Left ventricle myocardium superior (tissue), 1 donor: ENCODE measurements at regions of chr11 and their contacts with region 1.

Region 1: DNA sequence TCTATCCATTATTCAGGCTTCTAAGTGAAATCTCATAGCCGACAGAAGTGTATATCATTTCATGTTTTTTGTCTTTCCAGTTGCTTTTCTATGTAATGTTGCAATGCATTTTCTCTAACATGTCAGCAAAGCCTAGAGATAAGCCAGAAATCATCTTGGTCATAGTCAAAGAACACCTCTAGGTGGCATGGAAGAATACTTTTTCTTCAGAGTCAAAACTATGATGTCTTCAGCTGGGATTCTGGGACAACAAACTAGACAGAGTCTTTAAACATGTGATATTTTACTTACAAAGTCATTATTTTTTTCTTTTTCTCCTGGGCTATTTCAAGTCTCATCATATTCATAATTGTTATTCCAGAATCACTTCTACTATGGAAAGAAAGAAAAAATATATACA is 4.4 kb downstream of the GAS2 start:
- DNase-seq: no peak
- ATAC-seq: no peak

Region 2: GRCh38 chr11:22728600-22729389 is 58.0 kb after region 1 on chr11:
- intact Hi-C with region 1: loop called (anchors 10 kb)
- DNase-seq: no peak
- ATAC-seq: no peak

Region 3: GRCh38 chr11:22851477-22851876 is 180.6 kb after region 1 on chr11:
- intact Hi-C with region 1: no loop called
- DNase-seq: no peak
- ATAC-seq: no peak

Region 4: DNA sequence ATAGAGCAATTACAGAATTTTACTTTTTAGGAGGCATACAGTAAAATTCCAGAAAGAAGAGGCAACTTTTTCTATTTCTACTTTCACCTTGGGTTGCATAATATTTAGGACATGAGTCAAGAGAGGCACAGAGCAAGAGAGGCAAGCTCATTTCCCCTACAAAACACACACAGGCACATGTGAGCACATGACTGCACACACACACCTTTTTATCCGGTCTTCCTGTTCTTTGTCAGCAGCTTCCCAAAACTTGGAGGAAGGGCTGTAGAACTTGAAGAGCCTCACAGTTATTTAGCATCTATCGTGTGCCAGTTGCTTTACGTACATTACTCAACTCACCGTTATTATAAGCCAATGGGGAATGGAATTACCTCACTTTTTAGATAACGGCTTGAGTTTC is 227.2 kb after region 1 on chr11:
- intact Hi-C with region 1: no loop called
- DNase-seq: no peak
- ATAC-seq: no peak